Activated CD4-positive, alpha-beta memory T cell treated with anti-CD3 and anti-CD28 coated beads for 36 hours (primary cell): ENCODE measurements at regions of chr1 and their contacts with region 1.

Region 1: GRCh38 chr1:160251687-160252526 is 10.4 kb downstream of the DCAF8 start:
- DNase-seq: peak; percentile 57
- H3K4me3 Mint-ChIP-seq: no peak overlapping the region
- H3K27ac Mint-ChIP-seq: peak overlapping the region; percentile 5
- H3K4me1 Mint-ChIP-seq: peaks cover 11% of the 10 kb centered on the region
- H3K27me3 Mint-ChIP-seq: no peaks in the 10 kb centered on the region

Region 2: DNA sequence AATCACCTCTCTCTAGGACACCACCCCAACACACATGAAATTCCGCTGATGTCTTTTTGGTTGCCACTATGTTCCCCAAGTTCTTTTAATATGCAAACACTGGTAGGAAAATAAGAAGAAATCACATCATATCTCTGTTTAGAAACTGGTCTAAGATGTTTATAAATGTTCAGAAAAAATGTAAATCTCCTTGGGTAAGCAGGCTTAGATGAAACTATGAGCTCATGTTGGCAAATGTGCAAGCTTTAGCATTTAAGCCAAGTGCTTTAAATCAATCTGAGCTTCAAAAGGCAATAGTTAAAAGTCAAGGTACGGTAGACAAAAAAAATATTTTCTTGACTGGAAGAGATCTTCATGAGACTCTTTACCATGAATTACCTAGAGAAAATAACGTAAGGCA is 272.6 kb before region 1 on chr1:
- CTCF ChIA-PET with region 1: no interaction called
- POLR2A ChIA-PET with region 1: no interaction called
- intact Hi-C with region 1: no loop called
- DNase-seq: no peak
- H3K4me3 Mint-ChIP-seq: no peak overlapping the region
- H3K27ac Mint-ChIP-seq: no peak overlapping the region
- H3K4me1 Mint-ChIP-seq: no peaks in the 10 kb centered on the region
- H3K27me3 Mint-ChIP-seq: peaks cover 26% of the 10 kb centered on the region

Region 3: DNA sequence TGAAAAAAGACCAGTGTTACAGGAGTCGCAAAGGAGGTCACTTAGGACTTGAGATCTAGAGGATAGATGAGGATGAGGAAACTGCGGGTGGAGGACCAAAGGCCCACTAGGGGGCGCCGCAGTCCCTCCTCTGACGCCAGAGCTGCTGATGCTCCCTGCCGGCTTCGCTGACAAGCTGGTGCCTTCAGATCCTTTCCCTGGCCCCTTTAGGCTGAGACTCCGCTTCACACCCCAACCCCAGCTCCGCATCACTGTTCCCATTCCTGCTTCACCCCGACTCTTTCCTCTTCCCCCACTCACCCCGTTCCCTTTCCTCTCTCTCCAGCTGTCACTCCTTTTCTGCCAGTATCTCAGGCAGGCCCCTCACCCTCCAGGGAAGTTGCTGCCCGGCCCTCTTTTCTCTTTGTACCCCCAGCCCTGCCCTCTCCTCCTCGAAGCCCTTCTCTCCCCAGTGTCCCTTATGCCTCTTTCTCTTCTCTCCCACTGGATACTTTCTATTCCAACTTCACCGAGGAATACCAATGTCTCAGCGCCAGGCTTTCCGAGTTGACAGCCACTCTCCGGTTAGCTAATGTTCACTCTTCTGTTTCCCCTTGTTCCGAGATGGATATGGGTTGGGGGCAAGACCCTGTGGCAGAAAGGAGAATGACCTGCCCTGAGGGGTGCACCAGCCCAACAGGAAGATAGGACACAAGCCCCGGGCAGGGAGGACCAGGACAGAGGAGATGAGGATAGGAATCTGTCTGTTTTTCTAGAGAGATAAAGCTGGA is 166.0 kb before region 1 on chr1:
- CTCF ChIA-PET with region 1: interaction called, 21 read pairs
- POLR2A ChIA-PET with region 1: no interaction called
- intact Hi-C with region 1: no loop called
- DNase-seq: peak; percentile 87
- H3K4me3 Mint-ChIP-seq: no peak overlapping the region
- H3K27ac Mint-ChIP-seq: no peak overlapping the region
- H3K4me1 Mint-ChIP-seq: peaks cover 13% of the 10 kb centered on the region
- H3K27me3 Mint-ChIP-seq: peaks cover 21% of the 10 kb centered on the region

Region 4: DNA sequence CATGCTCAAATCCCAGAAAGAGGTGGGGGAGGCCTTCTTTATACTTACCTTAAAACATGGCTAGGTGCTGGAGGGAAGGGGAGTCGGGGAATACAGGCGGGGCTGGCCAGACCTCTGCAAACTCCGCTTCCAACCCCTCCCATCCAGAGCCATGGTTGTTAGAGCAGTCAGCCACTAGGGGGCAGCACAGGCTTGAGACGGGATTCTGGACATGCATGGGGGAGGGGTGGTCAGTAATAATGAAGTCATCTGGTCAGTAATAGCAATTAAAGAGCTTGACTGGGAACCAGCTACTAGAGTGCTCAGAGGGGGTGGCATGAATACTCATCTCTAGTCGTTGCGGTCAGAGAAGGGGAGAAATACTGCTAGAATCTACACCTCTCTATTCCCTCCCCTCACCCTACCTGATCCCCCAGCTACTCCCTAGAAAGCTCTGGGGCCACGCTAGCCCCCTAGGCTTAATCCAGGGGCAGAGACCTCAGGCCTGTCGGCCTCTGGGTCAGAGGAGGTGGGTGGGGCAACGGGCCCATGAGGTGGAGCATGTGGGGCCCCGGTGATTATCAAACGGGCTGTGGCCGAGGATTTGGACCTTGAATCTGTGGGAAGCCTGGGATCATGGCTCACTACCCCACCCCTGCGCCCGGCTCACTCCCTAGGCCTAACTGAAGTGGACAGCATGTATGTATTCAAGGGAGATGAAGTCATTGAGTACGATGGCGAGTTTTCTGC is 58.7 kb before region 1 on chr1:
- CTCF ChIA-PET with region 1: interaction called, 57 read pairs
- POLR2A ChIA-PET with region 1: interaction called, 3 read pairs
- intact Hi-C with region 1: loop called (anchors 1 kb)
- DNase-seq: peak; percentile 86
- H3K4me3 Mint-ChIP-seq: no peak overlapping the region
- H3K27ac Mint-ChIP-seq: no peak overlapping the region
- H3K4me1 Mint-ChIP-seq: no peaks in the 10 kb centered on the region
- H3K27me3 Mint-ChIP-seq: no peaks in the 10 kb centered on the region

Region 5: GRCh38 chr1:160219062-160219929 is 32.6 kb before region 1 on chr1:
- CTCF ChIA-PET with region 1: interaction called, 11 read pairs
- POLR2A ChIA-PET with region 1: no interaction called
- intact Hi-C with region 1: no loop called
- DNase-seq: no peak
- H3K4me3 Mint-ChIP-seq: no peak overlapping the region
- H3K27ac Mint-ChIP-seq: no peak overlapping the region
- H3K4me1 Mint-ChIP-seq: no peaks in the 10 kb centered on the region
- H3K27me3 Mint-ChIP-seq: no peaks in the 10 kb centered on the region

Region 6: DNA sequence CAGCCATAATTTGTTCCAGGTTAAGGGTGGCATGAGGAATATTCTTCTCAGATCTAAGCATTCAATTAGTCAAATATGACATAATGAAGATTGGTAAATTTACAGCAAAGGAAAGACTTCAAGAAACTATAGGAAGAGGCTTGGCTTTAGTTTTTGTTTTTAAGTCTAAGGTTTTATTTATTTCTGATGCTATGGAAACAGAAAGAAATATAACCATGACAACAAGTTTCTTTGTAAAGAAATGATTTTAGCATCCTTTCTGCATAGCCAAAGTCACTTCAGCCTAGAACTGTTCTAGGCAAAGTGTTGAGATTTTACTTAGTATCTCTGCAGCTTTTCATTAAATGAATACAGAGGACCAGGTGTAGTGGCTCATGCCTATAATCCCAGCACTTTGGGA is 19.0 kb before region 1 on chr1:
- CTCF ChIA-PET with region 1: interaction called, 15 read pairs
- POLR2A ChIA-PET with region 1: interaction called, 3 read pairs
- intact Hi-C with region 1: no loop called
- DNase-seq: no peak
- H3K4me3 Mint-ChIP-seq: no peak overlapping the region
- H3K27ac Mint-ChIP-seq: no peak overlapping the region
- H3K4me1 Mint-ChIP-seq: peaks cover 16% of the 10 kb centered on the region
- H3K27me3 Mint-ChIP-seq: no peaks in the 10 kb centered on the region

Region 7: DNA sequence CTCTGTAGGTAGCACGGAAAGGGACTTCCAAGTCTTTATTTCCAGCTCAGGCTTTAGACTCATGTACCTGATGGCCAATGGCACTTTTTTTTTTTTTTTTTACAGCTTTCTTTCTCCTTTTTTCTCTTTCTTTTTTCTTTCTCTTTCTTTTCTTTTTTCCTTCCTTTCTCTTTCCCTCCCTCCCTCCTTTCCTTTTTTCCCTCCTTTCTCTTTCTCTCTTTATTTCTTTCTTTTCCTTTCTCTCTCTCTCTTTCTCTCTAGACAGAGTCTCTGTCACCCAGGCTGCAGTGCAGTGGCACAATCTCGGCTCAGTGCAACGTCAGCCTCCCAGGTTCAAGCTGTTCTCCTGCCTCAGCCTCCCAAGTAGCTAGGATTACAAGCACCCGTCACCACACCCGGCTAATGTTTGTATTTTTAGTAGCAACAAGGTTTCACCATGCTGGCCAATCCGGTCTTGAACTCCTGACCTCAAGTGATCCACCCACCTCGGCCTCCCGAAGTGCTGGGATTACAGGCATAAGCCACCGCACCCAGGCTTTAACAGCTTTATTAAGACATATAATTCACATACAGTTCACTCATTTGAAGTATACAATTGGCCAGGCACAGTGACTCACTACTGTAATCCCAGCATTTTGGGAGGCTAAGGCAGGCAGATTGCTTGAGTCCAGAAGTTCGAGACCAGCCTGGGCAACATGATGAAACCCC is 15.5 kb after region 1 on chr1:
- CTCF ChIA-PET with region 1: interaction called, 56 read pairs
- POLR2A ChIA-PET with region 1: interaction called, 6 read pairs
- intact Hi-C with region 1: no loop called
- DNase-seq: no peak
- H3K4me3 Mint-ChIP-seq: no peak overlapping the region
- H3K27ac Mint-ChIP-seq: no peak overlapping the region
- H3K4me1 Mint-ChIP-seq: peaks cover 10% of the 10 kb centered on the region
- H3K27me3 Mint-ChIP-seq: no peaks in the 10 kb centered on the region

Region 8: GRCh38 chr1:160437432-160438316 is 185.8 kb after region 1 on chr1:
- CTCF ChIA-PET with region 1: no interaction called
- POLR2A ChIA-PET with region 1: no interaction called
- intact Hi-C with region 1: no loop called
- DNase-seq: peak; percentile 32
- H3K4me3 Mint-ChIP-seq: peak overlapping the region; percentile 59
- H3K27ac Mint-ChIP-seq: peak overlapping the region; percentile 84
- H3K4me1 Mint-ChIP-seq: peaks cover 45% of the 10 kb centered on the region
- H3K27me3 Mint-ChIP-seq: no peaks in the 10 kb centered on the region